Common myeloid progenitor, CD34-positive (primary cell): ENCODE measurements at regions of chr12 and their contacts with region 1.

Region 1: DNA sequence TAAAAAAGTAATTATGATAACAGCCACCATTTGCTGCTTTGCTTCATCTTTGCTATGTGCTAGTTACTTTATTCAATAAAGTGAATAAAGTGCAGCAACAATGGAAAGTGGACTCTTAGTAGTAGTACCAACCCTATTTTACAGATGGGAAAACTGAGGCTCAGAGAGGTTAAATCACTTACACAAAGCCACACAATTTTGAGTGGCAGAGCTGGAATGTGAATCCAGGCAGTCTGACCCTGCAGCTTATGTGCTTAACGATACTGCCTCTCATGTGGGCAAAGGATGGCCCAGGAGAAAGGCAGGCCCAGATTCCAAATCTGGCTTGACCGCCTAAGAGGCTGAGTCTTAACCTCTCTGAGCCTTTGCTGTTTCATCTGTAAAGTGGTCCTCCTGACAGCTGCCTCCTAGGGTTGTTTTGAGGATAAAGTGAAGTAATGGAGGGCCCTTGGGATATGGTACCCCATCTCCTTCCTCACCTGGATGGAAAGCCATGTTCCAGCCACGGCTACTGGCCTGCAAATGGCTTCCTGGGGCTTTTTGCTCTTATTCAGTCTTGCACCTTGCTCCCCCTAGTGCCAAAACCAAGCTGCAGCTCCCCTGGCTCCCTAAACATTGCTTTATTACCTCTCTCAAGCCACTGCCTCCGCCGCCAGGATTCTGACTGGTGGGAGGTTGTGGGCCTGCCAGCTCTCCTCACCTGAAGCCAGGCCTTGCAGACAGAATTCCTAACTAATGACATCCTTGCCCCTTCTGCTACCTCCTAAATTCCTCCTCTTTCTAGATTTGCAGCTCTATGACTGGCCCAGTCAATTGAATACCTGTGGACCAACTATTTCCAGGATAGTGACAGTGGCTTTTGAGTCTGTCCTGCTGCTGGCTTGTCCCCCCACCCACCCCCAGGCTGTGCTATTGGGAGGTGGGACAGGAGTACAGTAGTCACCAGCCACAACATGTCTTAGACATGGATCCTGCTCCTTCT is 283.3 kb upstream of the PWP1 start:
- DNase-seq: peak; percentile 72 to 79 (median 78)
- H3K4me3 ChIP-seq: no peak overlapping the region
- H3K27ac ChIP-seq: no peak overlapping the region
- H3K4me1 ChIP-seq: peaks cover 0 to 12% (median 9%) of the 10 kb centered on the region in 4 experiments
- H3K27me3 ChIP-seq: no peaks in the 10 kb centered on the region

Region 2: GRCh38 chr12:107093417-107094182 is 308.7 kb before region 1 on chr12 and contains the start of gene CRY1:
- CTCF ChIA-PET with region 1: no interaction called
- POLR2A ChIA-PET with region 1: no interaction called
- DNase-seq: peak; percentile 91 to 94 (median 93)
- H3K4me3 ChIP-seq: peak within 1 kb of the TSS; percentile 57 to 93 (median 81)
- H3K27ac ChIP-seq: peak within 1 kb of the TSS; percentile 88 to 95
- H3K4me1 ChIP-seq: peaks cover 10 to 33% (median 23%) of the 10 kb centered on the region in 4 experiments
- H3K27me3 ChIP-seq: no peaks in the 10 kb centered on the region

Region 3: GRCh38 chr12:107320033-107320928 is 82.1 kb before region 1 on chr12:
- CTCF ChIA-PET with region 1: interaction called, 34 read pairs
- POLR2A ChIA-PET with region 1: no interaction called
- DNase-seq: peak; percentile 74 to 89 (median 88)
- H3K4me3 ChIP-seq: peak overlapping the region; percentile 53 to 90 (median 77)
- H3K27ac ChIP-seq: peak overlapping the region in 1 of 2 experiments; percentile 83
- H3K4me1 ChIP-seq: peaks cover 17 to 67% (median 57%) of the 10 kb centered on the region in 4 experiments
- H3K27me3 ChIP-seq: peaks cover 0 to 3% (median 0%) of the 10 kb centered on the region in 5 experiments

Region 4: DNA sequence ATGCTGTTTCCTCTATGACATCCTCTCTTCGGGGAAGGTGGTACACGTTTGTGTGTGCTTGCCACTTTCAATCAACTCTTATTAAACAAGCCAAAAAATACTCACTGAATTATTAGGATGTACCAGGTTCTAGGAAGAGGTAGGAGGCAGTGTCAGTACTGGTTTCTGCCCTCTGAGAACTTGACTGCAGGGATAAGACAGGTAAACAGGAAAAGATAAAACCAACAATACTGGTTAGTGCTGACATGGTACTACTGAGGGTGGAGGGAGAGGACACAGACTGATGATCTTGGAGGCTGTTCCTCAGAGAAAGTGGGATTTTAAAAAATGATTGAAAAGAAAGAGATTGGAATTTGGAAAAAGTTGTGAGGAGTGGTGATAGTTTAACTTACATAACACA is 11.9 kb before region 1 on chr12:
- CTCF ChIA-PET with region 1: interaction called, 14 read pairs
- POLR2A ChIA-PET with region 1: no interaction called
- DNase-seq: no peak
- H3K4me3 ChIP-seq: no peak overlapping the region
- H3K27ac ChIP-seq: no peak overlapping the region
- H3K4me1 ChIP-seq: peaks cover 0 to 7% (median 0%) of the 10 kb centered on the region in 4 experiments
- H3K27me3 ChIP-seq: no peaks in the 10 kb centered on the region

Region 5: DNA sequence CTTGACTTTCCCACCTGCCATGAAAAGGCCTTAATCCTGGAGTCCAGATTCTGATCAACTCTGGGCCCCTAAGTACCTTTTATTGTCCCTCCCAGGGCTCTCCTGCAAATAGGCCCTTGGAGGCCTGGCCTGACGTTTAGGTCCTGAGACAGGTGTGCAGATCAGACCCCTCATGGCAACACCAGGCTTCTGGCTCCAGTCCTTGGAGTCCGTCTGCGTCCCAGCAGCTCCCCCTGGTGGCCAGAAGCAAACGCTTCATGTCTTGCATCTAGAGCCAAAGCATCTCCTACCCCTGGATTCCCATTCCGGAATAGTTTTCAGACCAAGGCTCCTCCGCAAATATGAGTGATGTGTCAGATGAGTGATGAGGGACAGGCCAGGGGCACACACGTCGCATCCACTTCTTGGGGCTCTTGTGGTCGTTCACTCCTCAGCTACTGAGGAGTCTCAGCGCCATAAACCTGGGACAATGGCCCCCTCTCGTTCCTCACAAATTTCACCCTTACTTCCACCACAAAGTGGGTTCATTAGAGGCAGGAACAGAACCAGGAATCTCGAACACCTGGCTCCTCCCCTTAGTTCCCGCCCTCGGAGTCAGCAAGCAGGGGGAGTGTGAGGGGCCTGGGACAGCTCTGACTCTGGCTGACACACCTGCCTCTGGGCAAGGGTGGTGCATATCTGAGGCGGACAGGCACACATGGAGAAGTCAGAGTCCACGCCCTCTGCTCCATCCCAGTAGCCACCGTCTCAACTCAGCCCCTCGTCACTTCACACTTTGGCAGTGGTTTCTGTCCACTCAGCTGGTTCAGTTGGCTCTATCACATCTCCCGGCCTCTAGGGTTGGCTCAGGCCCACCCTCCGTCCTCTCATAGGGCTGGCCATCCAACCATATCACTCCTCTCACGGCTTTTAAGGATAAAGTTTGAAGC is 205.4 kb after region 1 on chr12:
- CTCF ChIA-PET with region 1: interaction called, 62 read pairs
- POLR2A ChIA-PET with region 1: no interaction called
- DNase-seq: peak; percentile 70 to 87 (median 77)
- H3K4me3 ChIP-seq: no peak overlapping the region
- H3K27ac ChIP-seq: no peak overlapping the region
- H3K4me1 ChIP-seq: no peaks in the 10 kb centered on the region
- H3K27me3 ChIP-seq: no peaks in the 10 kb centered on the region

Region 6: DNA sequence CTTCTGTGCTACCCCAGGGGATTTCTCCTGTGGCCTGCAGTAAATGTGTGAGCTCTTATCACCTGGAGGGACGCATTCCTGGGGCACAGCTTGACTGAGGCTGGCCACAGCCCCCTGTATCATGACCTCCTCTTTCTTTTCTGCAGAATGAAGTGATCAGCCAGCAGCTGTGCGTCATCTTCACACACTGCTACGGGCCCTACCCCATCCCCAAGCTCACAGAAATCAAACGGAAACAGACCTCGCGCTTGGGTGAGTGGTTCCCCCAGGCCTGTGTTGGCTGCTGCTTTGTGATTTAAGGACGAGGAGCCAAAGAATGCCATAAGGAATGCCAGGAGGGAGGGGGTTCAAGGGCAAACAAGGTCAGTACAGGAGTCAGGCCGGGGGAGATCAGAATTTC is 232.8 kb after region 1 on chr12:
- CTCF ChIA-PET with region 1: no interaction called
- POLR2A ChIA-PET with region 1: no interaction called
- DNase-seq: peak in 2 of 3 donors; percentile 7 to 18
- H3K4me3 ChIP-seq: no peak overlapping the region
- H3K27ac ChIP-seq: no peak overlapping the region
- H3K4me1 ChIP-seq: no peaks in the 10 kb centered on the region
- H3K27me3 ChIP-seq: no peaks in the 10 kb centered on the region

Region 7: DNA sequence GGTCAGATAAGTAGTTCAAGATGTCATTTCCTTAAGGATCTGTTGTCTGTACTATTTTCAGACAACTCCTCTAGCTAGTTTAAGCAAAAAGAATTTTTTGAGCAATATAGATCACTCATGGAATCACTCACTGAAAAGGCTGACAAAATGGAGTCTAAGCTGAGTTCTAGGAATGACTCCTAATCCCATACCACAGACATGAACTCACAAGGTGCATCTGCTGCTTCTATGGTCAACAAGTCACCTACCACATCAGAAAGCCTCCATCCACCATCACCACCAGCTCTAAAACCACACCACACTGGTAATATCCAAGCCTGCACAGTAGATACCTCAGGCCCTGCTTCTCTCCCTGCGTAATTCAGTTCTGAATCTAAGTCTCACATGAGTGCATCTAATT is 316.3 kb after region 1 on chr12:
- CTCF ChIA-PET with region 1: no interaction called
- POLR2A ChIA-PET with region 1: no interaction called
- DNase-seq: no peak
- H3K4me3 ChIP-seq: no peak overlapping the region
- H3K27ac ChIP-seq: no peak overlapping the region
- H3K4me1 ChIP-seq: no peaks in the 10 kb centered on the region
- H3K27me3 ChIP-seq: no peaks in the 10 kb centered on the region